ENCODE measurements at regions of chr12 and their contacts with region 1.

Region 1: GRCh38 chr12:93243689-93244513 is 133.8 kb upstream of the NUDT4 start:
- DNase-seq: peak; percentile 75
- ATAC-seq: peak; percentile 52
- H3K4me3 ChIP-seq: peak overlapping the region; percentile 47
- H3K27ac ChIP-seq: peak overlapping the region; percentile 87
- H3K4me1 ChIP-seq: peaks cover 62% of the 10 kb centered on the region
- H3K27me3 ChIP-seq: no peaks in the 10 kb centered on the region
- CTCF ChIP-seq: no peak
- EP300 ChIP-seq: no peak
- POLR2A ChIP-seq: no peak
- RAD21 ChIP-seq: 0 out of 2 replicates have a peak, but pooled peaks have one; percentile 1

Region 2: DNA sequence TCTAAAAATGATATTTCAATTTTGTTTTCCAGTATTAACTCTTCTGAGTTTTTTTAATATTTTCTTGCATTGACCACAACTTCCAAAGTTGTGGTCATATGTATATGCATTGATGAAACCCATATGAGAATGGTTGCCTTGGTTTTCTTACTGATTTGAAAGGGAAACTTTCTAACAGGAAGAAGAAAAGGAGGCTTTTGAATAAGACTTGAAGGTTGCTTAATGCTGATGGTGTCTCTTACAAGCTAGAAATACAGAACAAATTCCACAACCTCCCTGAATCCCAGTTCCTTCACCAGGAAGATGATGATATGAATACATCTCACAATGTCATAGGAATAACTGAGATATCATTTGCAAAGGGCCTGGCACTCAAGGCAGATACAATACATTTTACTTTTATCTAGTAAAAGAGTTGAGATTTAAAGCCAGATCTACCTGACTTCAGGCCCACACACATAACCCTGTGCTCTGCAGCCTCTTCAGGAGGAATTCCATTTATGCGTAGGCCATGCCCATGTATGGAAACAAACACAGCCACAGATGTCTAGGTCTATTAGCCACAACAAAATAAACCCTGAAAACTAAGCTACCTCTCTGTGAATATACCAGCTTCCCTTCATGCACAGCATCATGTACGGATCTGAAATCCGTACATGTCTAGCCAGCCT is 706.5 kb before region 1 on chr12:
- CTCF ChIA-PET with region 1: no interaction called
- POLR2A ChIA-PET with region 1: no interaction called
- RAD21 ChIA-PET with region 1: no interaction called
- SMC1A ChIA-PET with region 1: no interaction called
- in situ Hi-C with region 1: no loop called
- intact Hi-C with region 1: no loop called
- DNase-seq: no peak
- ATAC-seq: peak; percentile 12
- H3K4me3 ChIP-seq: no peak overlapping the region
- H3K27ac ChIP-seq: peak overlapping the region; percentile 99
- H3K4me1 ChIP-seq: peaks cover 62% of the 10 kb centered on the region
- H3K27me3 ChIP-seq: no peaks in the 10 kb centered on the region
- CTCF ChIP-seq: no peak
- EP300 ChIP-seq: peak in 1 of 2 experiments; percentile 15; a peak in 1 of 4 replicates
- POLR2A ChIP-seq: no peak
- RAD21 ChIP-seq: no peak

Region 3: GRCh38 chr12:92649511-92650227 is 594.2 kb before region 1 on chr12:
- CTCF ChIA-PET with region 1: no interaction called
- POLR2A ChIA-PET with region 1: no interaction called
- RAD21 ChIA-PET with region 1: no interaction called
- SMC1A ChIA-PET with region 1: no interaction called
- in situ Hi-C with region 1: no loop called
- intact Hi-C with region 1: no loop called
- DNase-seq: peak; percentile 67
- ATAC-seq: peak; percentile 98
- H3K4me3 ChIP-seq: no peak overlapping the region
- H3K27ac ChIP-seq: no peak overlapping the region
- H3K4me1 ChIP-seq: no peaks in the 10 kb centered on the region
- H3K27me3 ChIP-seq: no peaks in the 10 kb centered on the region
- CTCF ChIP-seq: peak; percentile 72 to 85 (median 76); a peak in 5 of 6 replicates
- EP300 ChIP-seq: no peak
- POLR2A ChIP-seq: no peak
- RAD21 ChIP-seq: peak; percentile 96

Region 4: GRCh38 chr12:93098077-93098476 is 145.8 kb before region 1 on chr12:
- CTCF ChIA-PET with region 1: interaction called, 21 read pairs
- POLR2A ChIA-PET with region 1: no interaction called
- RAD21 ChIA-PET with region 1: interaction called, 25 read pairs
- SMC1A ChIA-PET with region 1: interaction called, 24 read pairs
- in situ Hi-C with region 1: no loop called
- intact Hi-C with region 1: loop called (anchors 5 kb)
- DNase-seq: peak; percentile 51
- ATAC-seq: peak; percentile 80
- H3K4me3 ChIP-seq: no peak overlapping the region
- H3K27ac ChIP-seq: no peak overlapping the region
- H3K4me1 ChIP-seq: peaks cover 20% of the 10 kb centered on the region
- H3K27me3 ChIP-seq: no peaks in the 10 kb centered on the region
- CTCF ChIP-seq: peak; percentile 36 to 54 (median 52)
- EP300 ChIP-seq: no peak
- POLR2A ChIP-seq: no peak
- RAD21 ChIP-seq: peak; percentile 80

Region 5: DNA sequence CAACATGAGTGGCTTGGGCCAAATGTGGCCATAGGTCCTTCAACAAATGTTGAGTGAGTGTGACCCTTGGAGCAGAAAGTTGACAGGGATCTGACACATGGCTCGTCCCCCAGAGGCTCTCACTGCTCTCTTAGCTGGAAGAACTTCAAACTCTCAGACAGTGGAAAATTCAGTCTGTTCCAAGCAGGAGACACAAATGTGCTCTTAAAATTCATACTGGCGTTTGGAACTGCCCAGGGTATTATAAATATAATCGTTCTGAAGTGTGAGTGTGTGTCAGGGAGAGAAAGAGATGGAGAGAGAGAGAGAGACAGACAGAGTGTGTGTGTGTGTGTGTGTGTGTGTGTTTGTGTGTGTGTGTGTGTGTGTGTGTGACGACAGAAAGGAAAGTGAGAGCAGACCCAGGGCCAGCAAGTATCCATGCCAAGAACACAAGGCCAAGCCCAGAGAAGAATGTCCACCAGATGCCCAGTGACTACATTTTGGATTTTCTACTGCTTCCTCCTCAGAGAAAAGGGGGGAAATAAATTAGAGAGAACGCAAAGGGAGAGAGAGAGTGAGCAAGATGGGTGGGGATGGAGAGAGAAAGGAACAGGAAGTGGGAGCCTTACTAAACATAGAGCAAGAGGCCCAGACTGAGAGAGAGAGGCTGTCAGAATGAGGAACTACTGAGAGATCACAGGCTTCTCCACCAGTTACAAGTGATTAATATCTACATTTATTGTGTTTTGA is 59.8 kb before region 1 on chr12:
- CTCF ChIA-PET with region 1: interaction called, 4 read pairs
- POLR2A ChIA-PET with region 1: interaction called, 4 read pairs
- RAD21 ChIA-PET with region 1: interaction called, 17 read pairs
- SMC1A ChIA-PET with region 1: interaction called, 15 read pairs
- in situ Hi-C with region 1: no loop called
- intact Hi-C with region 1: no loop called
- DNase-seq: peak; percentile 73
- ATAC-seq: peak; percentile 95
- H3K4me3 ChIP-seq: peak overlapping the region; percentile 20; the same call in 1 of the 2 replicates
- H3K27ac ChIP-seq: peak overlapping the region; percentile 86
- H3K4me1 ChIP-seq: peaks cover 25% of the 10 kb centered on the region
- H3K27me3 ChIP-seq: no peaks in the 10 kb centered on the region
- CTCF ChIP-seq: no peak
- EP300 ChIP-seq: peak; percentile 32; a peak in 2 of 4 replicates
- POLR2A ChIP-seq: 0 out of 2 replicates have a peak, but pooled peaks have one; percentile 25
- RAD21 ChIP-seq: no peak

Region 6: GRCh38 chr12:93256256-93256969 is 12.5 kb after region 1 on chr12:
- CTCF ChIA-PET with region 1: interaction called, 6 read pairs
- POLR2A ChIA-PET with region 1: no interaction called
- RAD21 ChIA-PET with region 1: interaction called, 4 read pairs
- SMC1A ChIA-PET with region 1: interaction called, 10 read pairs
- in situ Hi-C with region 1: no loop called
- intact Hi-C with region 1: no loop called
- DNase-seq: no peak
- ATAC-seq: no peak
- H3K4me3 ChIP-seq: no peak overlapping the region
- H3K27ac ChIP-seq: no peak overlapping the region
- H3K4me1 ChIP-seq: no peaks in the 10 kb centered on the region
- H3K27me3 ChIP-seq: no peaks in the 10 kb centered on the region
- CTCF ChIP-seq: no peak
- EP300 ChIP-seq: no peak
- POLR2A ChIP-seq: no peak
- RAD21 ChIP-seq: no peak

Region 7: GRCh38 chr12:93363841-93364297 is 120.0 kb after region 1 on chr12:
- CTCF ChIA-PET with region 1: interaction called, 3 read pairs
- POLR2A ChIA-PET with region 1: no interaction called
- RAD21 ChIA-PET with region 1: interaction called, 11 read pairs
- SMC1A ChIA-PET with region 1: interaction called, 17 read pairs
- in situ Hi-C with region 1: no loop called
- intact Hi-C with region 1: no loop called
- DNase-seq: no peak
- ATAC-seq: peak; percentile 96
- H3K4me3 ChIP-seq: no peak overlapping the region
- H3K27ac ChIP-seq: no peak overlapping the region; the same call in 1 of the 2 replicates
- H3K4me1 ChIP-seq: peaks cover 16% of the 10 kb centered on the region
- H3K27me3 ChIP-seq: no peaks in the 10 kb centered on the region
- CTCF ChIP-seq: no peak
- EP300 ChIP-seq: no peak
- POLR2A ChIP-seq: no peak
- RAD21 ChIP-seq: no peak

Measured in GM12878 (cell line).